Activated CD4-positive, alpha-beta T cell treated with anti-CD3 and anti-CD28 coated beads for 36 hours (primary cell): ENCODE measurements at regions of chr1 and their contacts with region 1.

Region 1: GRCh38 chr1:39258146-39258924 is 53.8 kb downstream of the MACF1 start:
- DNase-seq: peak; percentile 75
- ATAC-seq: peak; percentile 74
- H3K4me3 Mint-ChIP-seq: no peak overlapping the region
- H3K27ac Mint-ChIP-seq: peak overlapping the region; percentile 51
- H3K4me1 Mint-ChIP-seq: peaks cover 37% of the 10 kb centered on the region
- H3K27me3 Mint-ChIP-seq: no peaks in the 10 kb centered on the region

Region 2: GRCh38 chr1:39105061-39105840 is 153.1 kb before region 1 on chr1:
- CTCF ChIA-PET with region 1: interaction called, 4 read pairs
- POLR2A ChIA-PET with region 1: no interaction called
- intact Hi-C with region 1: loop called (anchors 1 to 2 kb)
- DNase-seq: peak; percentile 77
- ATAC-seq: peak; percentile 75
- H3K4me3 Mint-ChIP-seq: no peak overlapping the region
- H3K27ac Mint-ChIP-seq: no peak overlapping the region
- H3K4me1 Mint-ChIP-seq: peaks cover 40% of the 10 kb centered on the region
- H3K27me3 Mint-ChIP-seq: peaks cover 8% of the 10 kb centered on the region

Region 3: GRCh38 chr1:39189592-39190041 is 68.7 kb before region 1 on chr1:
- CTCF ChIA-PET with region 1: interaction called, 174 read pairs
- POLR2A ChIA-PET with region 1: interaction called, 6 read pairs
- intact Hi-C with region 1: loop called (anchors 1 kb)
- DNase-seq: no peak
- ATAC-seq: no peak
- H3K4me3 Mint-ChIP-seq: no peak overlapping the region
- H3K27ac Mint-ChIP-seq: peak overlapping the region; percentile 91
- H3K4me1 Mint-ChIP-seq: peaks cover 90% of the 10 kb centered on the region
- H3K27me3 Mint-ChIP-seq: no peaks in the 10 kb centered on the region

Region 4: GRCh38 chr1:39214998-39215873 is 43.1 kb before region 1 on chr1:
- CTCF ChIA-PET with region 1: interaction called, 17 read pairs
- POLR2A ChIA-PET with region 1: no interaction called
- intact Hi-C with region 1: no loop called
- DNase-seq: peak; percentile 63
- ATAC-seq: peak; percentile 77
- H3K4me3 Mint-ChIP-seq: peak overlapping the region; percentile 90
- H3K27ac Mint-ChIP-seq: peak overlapping the region; percentile 97
- H3K4me1 Mint-ChIP-seq: peaks cover 53% of the 10 kb centered on the region
- H3K27me3 Mint-ChIP-seq: no peaks in the 10 kb centered on the region

Region 5: DNA sequence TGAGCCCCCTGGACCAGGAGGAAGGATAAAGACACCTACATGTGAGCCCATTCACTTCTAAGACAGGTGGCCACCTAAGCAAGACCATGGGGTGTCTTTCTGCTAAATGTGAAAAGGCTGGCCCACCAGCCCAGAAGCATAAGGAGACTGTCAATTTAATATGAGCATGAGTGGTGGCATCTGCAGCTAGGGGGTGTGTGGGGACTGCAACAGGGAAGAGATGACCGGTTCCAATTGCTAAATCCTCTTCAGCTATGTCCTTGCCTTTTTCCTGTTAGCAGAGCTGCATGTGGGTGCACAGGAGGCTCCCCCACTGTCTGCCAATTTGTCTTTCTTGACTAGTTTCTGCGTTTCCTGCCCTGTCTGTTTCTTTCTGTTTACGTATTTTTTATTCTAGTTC is 210.8 kb after region 1 on chr1:
- CTCF ChIA-PET with region 1: no interaction called
- POLR2A ChIA-PET with region 1: no interaction called
- intact Hi-C with region 1: no loop called
- DNase-seq: no peak
- ATAC-seq: no peak
- H3K4me3 Mint-ChIP-seq: no peak overlapping the region
- H3K27ac Mint-ChIP-seq: no peak overlapping the region
- H3K4me1 Mint-ChIP-seq: peaks cover 4% of the 10 kb centered on the region
- H3K27me3 Mint-ChIP-seq: no peaks in the 10 kb centered on the region